Activated CD8-positive, alpha-beta T cell treated with anti-CD3 and anti-CD28 coated beads for 36 hours (primary cell): ENCODE measurements at regions of chr10 and their contacts with region 1.

Region 1: DNA sequence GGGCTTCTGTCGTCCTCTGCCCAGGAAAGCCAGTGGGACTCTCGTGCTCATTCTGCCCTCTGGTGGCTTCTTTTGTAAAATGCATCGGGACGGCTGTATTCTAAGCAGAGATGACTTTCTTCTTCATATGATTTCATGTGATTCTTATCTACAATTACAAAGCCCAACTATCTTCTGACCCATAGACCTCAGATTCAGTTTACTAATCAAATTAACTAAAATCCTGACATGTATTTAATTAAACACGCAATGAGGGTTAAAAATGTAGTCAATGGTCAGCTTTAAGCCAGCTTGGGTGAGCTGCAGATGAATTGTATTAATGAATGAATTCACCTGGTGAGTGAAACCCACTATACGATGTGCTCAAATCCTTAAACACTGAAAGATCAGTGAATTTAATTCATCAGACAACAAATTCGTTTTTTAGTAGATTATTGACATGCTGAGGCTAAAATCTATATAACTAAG is 117.6 kb upstream of the FAM204A start:
- DNase-seq: peak; percentile 72
- ATAC-seq: peak; percentile 81
- H3K4me3 Mint-ChIP-seq: no peak overlapping the region
- H3K27ac Mint-ChIP-seq: no peak overlapping the region
- H3K4me1 Mint-ChIP-seq: peaks cover 6% of the 10 kb centered on the region
- H3K27me3 Mint-ChIP-seq: peaks cover 25% of the 10 kb centered on the region
- CTCF ChIP-seq: peak; percentile 64

Region 2: GRCh38 chr10:117496616-117497028 is 963.1 kb before region 1 on chr10:
- CTCF ChIA-PET with region 1: interaction called, 37 read pairs
- POLR2A ChIA-PET with region 1: no interaction called
- intact Hi-C with region 1: loop called (anchors 10 kb)
- DNase-seq: peak; percentile 77
- ATAC-seq: peak; percentile 86
- H3K4me3 Mint-ChIP-seq: no peak overlapping the region
- H3K27ac Mint-ChIP-seq: no peak overlapping the region
- H3K4me1 Mint-ChIP-seq: no peaks in the 10 kb centered on the region
- H3K27me3 Mint-ChIP-seq: peaks cover 29% of the 10 kb centered on the region
- CTCF ChIP-seq: peak; percentile 95

Region 3: DNA sequence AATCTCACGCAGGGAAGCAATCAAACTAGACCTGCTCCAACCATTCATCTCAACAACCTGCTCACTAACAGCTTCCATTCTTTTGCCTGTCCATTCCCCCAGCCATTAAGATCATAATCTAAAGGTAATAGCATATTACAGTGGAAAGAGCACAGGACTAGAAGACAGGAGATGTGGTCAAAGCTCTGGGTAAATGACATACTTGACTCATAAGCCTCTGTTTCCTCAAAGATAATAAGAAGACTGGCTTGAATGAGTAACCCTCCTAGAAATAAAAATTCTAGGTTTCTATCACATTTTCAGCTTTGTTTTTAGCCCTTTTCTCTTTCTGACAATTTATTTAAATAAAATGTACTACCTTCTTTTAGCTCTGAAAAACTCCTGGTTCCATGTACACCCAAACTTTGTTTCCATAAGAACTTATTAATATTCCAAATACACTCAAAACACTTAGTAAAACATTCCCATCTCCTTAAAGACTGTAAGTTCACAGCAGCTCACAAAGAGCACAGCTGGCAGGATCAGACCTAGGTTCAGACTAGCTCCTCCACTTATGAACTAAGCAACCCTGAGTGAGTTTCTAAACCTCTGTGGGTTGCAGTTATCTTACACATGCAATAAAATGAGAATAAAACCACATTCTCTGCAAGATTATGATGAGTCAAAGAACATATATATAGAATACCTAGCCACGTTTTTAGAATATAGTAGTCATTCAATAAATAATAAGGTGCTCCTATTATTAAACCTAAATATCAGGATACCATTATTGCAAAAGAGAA is 129.3 kb before region 1 on chr10:
- CTCF ChIA-PET with region 1: no interaction called
- POLR2A ChIA-PET with region 1: no interaction called
- intact Hi-C with region 1: no loop called
- DNase-seq: no peak
- ATAC-seq: peak; percentile 62
- H3K4me3 Mint-ChIP-seq: no peak overlapping the region
- H3K27ac Mint-ChIP-seq: peak overlapping the region; percentile 58
- H3K4me1 Mint-ChIP-seq: peaks cover 13% of the 10 kb centered on the region
- H3K27me3 Mint-ChIP-seq: no peaks in the 10 kb centered on the region
- CTCF ChIP-seq: no peak

Region 4: DNA sequence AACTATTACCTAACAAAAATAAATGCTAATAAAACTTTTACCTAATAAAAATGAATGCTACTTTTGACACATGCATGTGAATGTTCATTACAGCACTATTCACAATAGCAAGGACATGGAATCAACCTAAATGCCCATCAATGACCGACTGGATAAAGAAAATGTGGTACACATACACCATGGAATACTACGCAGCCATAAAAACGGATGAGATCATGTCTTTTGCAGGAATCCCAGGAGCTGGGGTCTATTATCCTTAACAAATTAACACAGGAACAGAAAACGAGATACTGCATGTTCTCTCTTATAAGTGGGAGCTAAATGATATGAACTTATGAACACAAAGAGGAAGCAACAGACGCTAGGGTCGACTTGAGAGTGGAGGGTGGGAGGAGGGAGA is 29.6 kb before region 1 on chr10:
- CTCF ChIA-PET with region 1: interaction called, 28 read pairs
- POLR2A ChIA-PET with region 1: no interaction called
- intact Hi-C with region 1: no loop called
- DNase-seq: no peak
- ATAC-seq: no peak
- H3K4me3 Mint-ChIP-seq: no peak overlapping the region
- H3K27ac Mint-ChIP-seq: no peak overlapping the region
- H3K4me1 Mint-ChIP-seq: no peaks in the 10 kb centered on the region
- H3K27me3 Mint-ChIP-seq: peaks cover 13% of the 10 kb centered on the region
- CTCF ChIP-seq: no peak

Region 5: DNA sequence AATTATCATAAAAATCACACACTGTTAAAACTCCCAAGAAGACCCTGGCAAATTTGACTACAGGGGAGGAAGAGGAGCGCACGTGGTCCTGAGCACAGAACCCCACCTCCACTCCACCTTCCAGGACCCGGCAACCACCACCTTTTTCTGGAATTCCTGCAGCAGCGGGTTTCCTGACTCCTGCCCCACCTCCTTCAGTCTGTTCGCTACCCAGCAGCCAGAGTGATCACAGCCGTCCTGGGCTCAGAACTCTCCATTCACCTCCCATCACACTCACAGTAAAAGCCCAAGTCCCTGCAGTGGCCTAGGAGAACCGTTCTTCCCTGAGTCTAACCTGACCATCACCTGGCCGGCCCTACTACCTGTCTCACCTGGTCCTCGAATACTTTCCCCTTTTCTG is 10.2 kb before region 1 on chr10:
- CTCF ChIA-PET with region 1: interaction called, 13 read pairs
- POLR2A ChIA-PET with region 1: no interaction called
- intact Hi-C with region 1: no loop called
- DNase-seq: no peak
- ATAC-seq: no peak
- H3K4me3 Mint-ChIP-seq: no peak overlapping the region
- H3K27ac Mint-ChIP-seq: no peak overlapping the region
- H3K4me1 Mint-ChIP-seq: no peaks in the 10 kb centered on the region
- H3K27me3 Mint-ChIP-seq: peaks cover 12% of the 10 kb centered on the region
- CTCF ChIP-seq: no peak

Region 6: DNA sequence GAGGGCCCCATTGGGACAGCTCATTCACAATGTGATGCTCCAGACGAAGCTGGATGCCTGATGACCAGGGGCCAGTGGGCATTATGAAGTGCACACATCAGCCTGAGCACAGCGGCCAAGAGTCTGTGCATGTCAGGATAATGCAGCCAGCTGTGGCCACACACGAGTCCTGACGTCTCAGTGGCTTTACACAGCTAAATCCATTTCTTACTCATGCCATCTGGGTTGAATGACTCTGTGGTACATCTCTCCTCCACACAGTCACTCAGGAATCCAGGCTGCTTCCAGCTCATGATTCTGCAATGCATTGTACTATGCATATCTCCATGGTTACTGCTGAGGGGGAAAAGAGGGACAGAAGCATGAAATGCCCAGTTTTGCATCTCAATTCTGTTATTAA is 12.1 kb after region 1 on chr10:
- CTCF ChIA-PET with region 1: interaction called, 18 read pairs
- POLR2A ChIA-PET with region 1: no interaction called
- intact Hi-C with region 1: no loop called
- DNase-seq: no peak
- ATAC-seq: no peak
- H3K4me3 Mint-ChIP-seq: no peak overlapping the region
- H3K27ac Mint-ChIP-seq: no peak overlapping the region
- H3K4me1 Mint-ChIP-seq: no peaks in the 10 kb centered on the region
- H3K27me3 Mint-ChIP-seq: peaks cover 6% of the 10 kb centered on the region
- CTCF ChIP-seq: no peak